ENCODE measurements at regions of chr2 and their contacts with region 1.

Region 1: GRCh38 chr2:64750817-64751285 is 97.1 kb upstream of the SERTAD2 start:
- DNase-seq: peak; percentile 99
- H3K4me3 Mint-ChIP-seq: peak overlapping the region; percentile 95
- H3K27ac Mint-ChIP-seq: peak overlapping the region; percentile 89
- H3K4me1 Mint-ChIP-seq: peaks cover 22% of the 10 kb centered on the region
- H3K27me3 Mint-ChIP-seq: no peaks in the 10 kb centered on the region

Region 2: DNA sequence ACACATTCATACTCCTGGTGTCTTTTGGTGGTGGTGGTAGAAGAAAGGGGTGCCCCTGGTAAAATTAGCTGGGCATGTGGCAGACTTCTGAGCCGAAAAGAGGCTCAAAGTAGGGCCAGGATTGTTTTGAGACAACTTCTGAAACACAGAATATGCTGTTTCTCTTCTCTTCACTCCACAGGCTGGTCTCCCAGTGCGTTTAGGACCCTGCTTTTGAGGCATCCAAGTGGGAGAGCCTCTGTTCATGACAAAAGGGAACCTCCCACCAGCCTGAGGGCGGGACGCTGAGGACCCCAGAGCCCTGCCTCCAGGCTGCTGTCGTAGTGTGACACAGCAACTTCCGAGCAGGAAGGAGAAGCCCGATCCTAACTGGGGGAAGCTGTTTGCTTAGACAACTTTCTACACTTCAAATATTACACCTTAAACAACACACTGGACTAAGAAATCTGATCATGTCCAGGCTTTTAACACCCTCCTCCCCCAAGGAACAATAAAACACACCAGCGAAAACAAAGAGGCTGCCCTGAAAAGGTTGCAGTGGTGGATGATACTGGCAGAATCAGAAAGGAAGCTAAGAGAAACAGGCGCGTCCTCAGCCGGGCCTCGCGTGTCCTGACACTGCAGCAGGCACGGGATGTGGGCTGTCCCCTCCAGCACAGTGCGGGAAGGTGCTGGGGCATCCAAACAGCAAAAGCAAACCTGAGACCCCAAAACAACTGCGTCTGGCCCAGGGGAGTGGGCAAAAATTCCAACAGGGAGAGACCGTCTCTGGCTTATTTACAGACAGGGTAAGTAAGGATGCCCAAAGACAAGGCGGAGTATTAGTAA is 106.5 kb before region 1 on chr2:
- CTCF ChIA-PET with region 1: interaction called, 12 read pairs
- POLR2A ChIA-PET with region 1: interaction called, 6 read pairs
- intact Hi-C with region 1: no loop called
- DNase-seq: peak; percentile 63
- H3K4me3 Mint-ChIP-seq: peak overlapping the region; percentile 82
- H3K27ac Mint-ChIP-seq: peak overlapping the region; percentile 78
- H3K4me1 Mint-ChIP-seq: peaks cover 53% of the 10 kb centered on the region
- H3K27me3 Mint-ChIP-seq: no peaks in the 10 kb centered on the region

Region 3: GRCh38 chr2:64698668-64699444 is 52.0 kb before region 1 on chr2:
- CTCF ChIA-PET with region 1: no interaction called
- POLR2A ChIA-PET with region 1: interaction called, 3 read pairs
- intact Hi-C with region 1: loop called (anchors 1 kb)
- DNase-seq: no peak
- H3K4me3 Mint-ChIP-seq: peak overlapping the region; percentile 47
- H3K27ac Mint-ChIP-seq: peak overlapping the region; percentile 72
- H3K4me1 Mint-ChIP-seq: peaks cover 41% of the 10 kb centered on the region
- H3K27me3 Mint-ChIP-seq: no peaks in the 10 kb centered on the region

Region 4: GRCh38 chr2:64767670-64768468 is 17.0 kb after region 1 on chr2:
- CTCF ChIA-PET with region 1: interaction called, 16 read pairs
- POLR2A ChIA-PET with region 1: interaction called, 10 read pairs
- intact Hi-C with region 1: loop called (anchors 1 kb)
- DNase-seq: peak; percentile 84
- H3K4me3 Mint-ChIP-seq: peak overlapping the region; percentile 80
- H3K27ac Mint-ChIP-seq: peak overlapping the region; percentile 77
- H3K4me1 Mint-ChIP-seq: peaks cover 19% of the 10 kb centered on the region
- H3K27me3 Mint-ChIP-seq: no peaks in the 10 kb centered on the region

Region 5: GRCh38 chr2:64859312-64860212 is 108.7 kb after region 1 on chr2:
- CTCF ChIA-PET with region 1: interaction called, 4 read pairs
- POLR2A ChIA-PET with region 1: no interaction called
- intact Hi-C with region 1: loop called (anchors 5 kb)
- DNase-seq: no peak
- H3K4me3 Mint-ChIP-seq: no peak overlapping the region
- H3K27ac Mint-ChIP-seq: no peak overlapping the region
- H3K4me1 Mint-ChIP-seq: peaks cover 4% of the 10 kb centered on the region
- H3K27me3 Mint-ChIP-seq: peaks cover 7% of the 10 kb centered on the region